ENCODE measurements at regions of chr5 and their contacts with region 1.

Region 1: DNA sequence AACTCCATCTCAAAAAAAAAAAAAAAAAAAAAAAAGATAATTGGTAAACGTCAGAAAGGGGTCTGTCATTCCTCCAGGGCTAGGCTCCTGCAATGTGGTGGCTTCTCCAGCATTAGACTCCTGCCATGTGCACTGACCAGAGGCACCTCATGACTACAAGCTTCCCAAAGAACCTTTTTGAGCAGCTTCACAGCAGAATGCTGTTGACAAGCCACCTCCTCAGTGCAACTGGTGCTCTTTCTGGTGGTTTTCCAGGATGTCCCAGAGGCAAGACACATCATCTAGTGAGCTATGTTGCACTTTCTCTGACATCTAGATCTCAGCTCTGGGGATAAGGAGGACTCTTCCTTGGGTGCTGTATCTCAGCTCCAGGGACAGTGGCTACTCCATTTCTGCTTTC is 11.6 kb downstream of the RPL37 start:
- DNase-seq: no peak
- ATAC-seq: no peak
- H3K4me3 Mint-ChIP-seq: no peak overlapping the region
- H3K27ac Mint-ChIP-seq: peak overlapping the region; percentile 48
- H3K4me1 Mint-ChIP-seq: peaks cover 7% of the 10 kb centered on the region
- H3K27me3 Mint-ChIP-seq: no peaks in the 10 kb centered on the region
- CTCF ChIP-seq: no peak

Region 2: DNA sequence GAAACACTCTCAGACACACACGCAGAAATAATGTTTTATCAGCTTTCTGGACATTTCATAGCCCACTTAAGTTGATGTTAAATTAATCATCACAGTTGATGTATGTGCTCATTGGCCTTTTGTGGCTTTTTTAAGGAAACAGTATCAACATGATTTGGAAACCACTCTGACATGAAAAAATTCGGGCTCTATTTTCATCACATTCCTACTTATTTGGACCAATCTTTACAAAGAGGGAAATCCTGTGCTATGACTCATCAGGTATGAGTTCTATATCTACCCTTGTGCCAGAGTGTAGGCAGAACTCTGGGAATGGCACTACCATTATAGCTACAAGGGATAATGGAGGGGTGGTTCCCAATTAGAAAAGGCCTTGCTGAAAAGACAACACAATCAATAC is 532.1 kb before region 1 on chr5:
- CTCF ChIA-PET with region 1: no interaction called
- POLR2A ChIA-PET with region 1: no interaction called
- intact Hi-C with region 1: no loop called
- DNase-seq: no peak
- ATAC-seq: no peak
- H3K4me3 Mint-ChIP-seq: no peak overlapping the region
- H3K27ac Mint-ChIP-seq: no peak overlapping the region
- H3K4me1 Mint-ChIP-seq: peaks cover 9% of the 10 kb centered on the region
- H3K27me3 Mint-ChIP-seq: no peaks in the 10 kb centered on the region
- CTCF ChIP-seq: no peak

Region 3: GRCh38 chr5:40812125-40812524 is 11.3 kb before region 1 on chr5:
- CTCF ChIA-PET with region 1: interaction called, 4 read pairs
- POLR2A ChIA-PET with region 1: interaction called, 14 read pairs
- intact Hi-C with region 1: no loop called
- DNase-seq: no peak
- ATAC-seq: no peak
- H3K4me3 Mint-ChIP-seq: no peak overlapping the region
- H3K27ac Mint-ChIP-seq: no peak overlapping the region
- H3K4me1 Mint-ChIP-seq: peaks cover 12% of the 10 kb centered on the region
- H3K27me3 Mint-ChIP-seq: no peaks in the 10 kb centered on the region
- CTCF ChIP-seq: no peak

Region 4: GRCh38 chr5:40834849-40835787 is 11.7 kb after region 1 on chr5 and contains the start of gene RPL37:
- CTCF ChIA-PET with region 1: no interaction called
- POLR2A ChIA-PET with region 1: interaction called, 36 read pairs
- intact Hi-C with region 1: no loop called
- DNase-seq: peak; percentile 96
- ATAC-seq: peak; percentile 96
- H3K4me3 Mint-ChIP-seq: peak within 1 kb of the TSS; percentile 93
- H3K27ac Mint-ChIP-seq: peak within 1 kb of the TSS; percentile 100
- H3K4me1 Mint-ChIP-seq: peaks cover 36% of the 10 kb centered on the region
- H3K27me3 Mint-ChIP-seq: no peaks in the 10 kb centered on the region
- CTCF ChIP-seq: no peak
- total RNA-seq, gene RPL37: 1,914 to 1,950 TPM

Region 5: GRCh38 chr5:41213340-41213739 is 389.9 kb after region 1 on chr5 and contains the start of gene C6:
- CTCF ChIA-PET with region 1: no interaction called
- POLR2A ChIA-PET with region 1: no interaction called
- intact Hi-C with region 1: no loop called
- DNase-seq: no peak
- ATAC-seq: no peak
- H3K4me3 Mint-ChIP-seq: no peak within 1 kb of the TSS
- H3K27ac Mint-ChIP-seq: no peak within 1 kb of the TSS
- H3K4me1 Mint-ChIP-seq: no peaks in the 10 kb centered on the region
- H3K27me3 Mint-ChIP-seq: no peaks in the 10 kb centered on the region
- CTCF ChIP-seq: no peak
- total RNA-seq, gene C6: not detected